Body of pancreas (tissue), 4 donors: ENCODE measurements at regions of chr17 and their contacts with region 1.

Region 1: DNA sequence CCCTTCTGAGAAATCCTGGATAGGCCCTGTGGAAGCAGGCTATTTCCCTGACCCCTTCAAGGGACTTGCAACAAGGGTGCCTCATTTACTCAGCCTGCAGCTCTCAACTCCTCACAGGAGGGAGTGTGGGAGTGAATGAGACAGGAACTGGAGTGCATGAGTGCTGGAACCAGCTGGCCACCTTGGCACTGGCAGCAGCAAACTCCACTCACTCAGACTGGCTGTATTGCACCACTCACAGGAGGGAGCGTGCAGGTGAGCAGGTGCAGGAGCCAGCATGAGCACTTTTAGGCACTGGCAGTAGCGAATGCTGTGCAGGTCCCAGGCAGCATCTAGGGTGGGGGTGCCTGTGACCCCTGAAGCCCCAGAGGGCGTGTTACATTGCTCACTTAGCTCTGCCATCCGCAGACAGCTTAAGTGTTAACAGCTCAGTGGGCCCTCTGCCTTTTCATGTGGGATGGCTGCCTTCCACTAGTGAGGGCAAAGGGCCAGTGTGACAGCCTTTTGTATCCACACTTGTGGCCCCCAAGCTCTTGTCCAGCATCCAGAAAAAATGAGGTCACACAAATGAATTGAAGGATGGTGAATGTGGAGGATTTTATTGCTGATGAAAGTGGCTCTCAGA is 11.0 kb upstream of the ZNHIT3 start:
- DNase-seq: no peak
- ATAC-seq: no peak
- H3K4me3 ChIP-seq: no peak overlapping the region
- H3K27ac ChIP-seq: no peak overlapping the region
- H3K4me1 ChIP-seq: no peaks in the 10 kb centered on the region
- H3K27me3 ChIP-seq: no peaks in the 10 kb centered on the region
- CTCF ChIP-seq: no peak
- POLR2A ChIP-seq: no peak

Region 2: DNA sequence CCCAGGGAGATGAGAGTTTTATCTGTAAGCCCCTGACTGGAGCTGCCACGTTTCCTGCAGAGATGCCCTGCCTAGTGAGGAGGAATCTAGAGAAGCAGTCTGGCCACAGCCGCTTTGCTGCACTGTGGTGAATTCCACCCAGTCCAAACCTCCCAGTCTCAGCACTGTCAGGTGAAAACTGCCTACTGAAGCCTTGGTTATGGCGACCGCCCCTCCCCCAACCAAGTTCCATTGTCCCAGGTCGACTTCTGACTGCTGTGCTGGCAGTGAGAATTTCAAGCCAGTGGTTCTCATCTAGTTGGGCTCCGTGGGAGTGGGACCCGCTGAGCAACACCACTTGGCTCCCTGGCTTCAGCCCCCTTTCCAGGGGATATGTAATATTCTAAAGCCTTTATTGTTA is 521.7 kb before region 1 on chr17:
- intact Hi-C with region 1: loop called (anchors 10 kb)
- DNase-seq: no peak
- ATAC-seq: no peak
- H3K4me3 ChIP-seq: no peak overlapping the region
- H3K27ac ChIP-seq: no peak overlapping the region
- H3K4me1 ChIP-seq: no peaks in the 10 kb centered on the region
- H3K27me3 ChIP-seq: no peaks in the 10 kb centered on the region
- CTCF ChIP-seq: no peak
- POLR2A ChIP-seq: no peak

Region 3: GRCh38 chr17:36808181-36808661 is 332.8 kb after region 1 on chr17:
- intact Hi-C with region 1: no loop called
- DNase-seq: no peak
- ATAC-seq: no peak
- H3K4me3 ChIP-seq: no peak overlapping the region
- H3K27ac ChIP-seq: no peak overlapping the region
- H3K4me1 ChIP-seq: peaks cover 10% of the 10 kb centered on the region
- H3K27me3 ChIP-seq: no peaks in the 10 kb centered on the region
- CTCF ChIP-seq: no peak
- POLR2A ChIP-seq: no peak